Activated CD4-positive, alpha-beta T cell treated with anti-CD3 and anti-CD28 coated beads, Interleukin-2, amount 10 ng/mL, durations not matched to agents 24 days and 14 days (primary cell): ENCODE measurements at regions of chr11 and their contacts with region 1.

Region 1: GRCh38 chr11:44565211-44565952 is at the start of gene CD82:
- DNase-seq: peak; percentile 100
- H3K4me3 Mint-ChIP-seq: peak within 1 kb of the TSS; percentile 90
- H3K27ac Mint-ChIP-seq: peak within 1 kb of the TSS; percentile 88
- H3K4me1 Mint-ChIP-seq: peaks cover 51% of the 10 kb centered on the region
- H3K27me3 Mint-ChIP-seq: no peaks in the 10 kb centered on the region
- total RNA-seq, gene CD82: 448 and 469 TPM in 2 replicates

Region 2: DNA sequence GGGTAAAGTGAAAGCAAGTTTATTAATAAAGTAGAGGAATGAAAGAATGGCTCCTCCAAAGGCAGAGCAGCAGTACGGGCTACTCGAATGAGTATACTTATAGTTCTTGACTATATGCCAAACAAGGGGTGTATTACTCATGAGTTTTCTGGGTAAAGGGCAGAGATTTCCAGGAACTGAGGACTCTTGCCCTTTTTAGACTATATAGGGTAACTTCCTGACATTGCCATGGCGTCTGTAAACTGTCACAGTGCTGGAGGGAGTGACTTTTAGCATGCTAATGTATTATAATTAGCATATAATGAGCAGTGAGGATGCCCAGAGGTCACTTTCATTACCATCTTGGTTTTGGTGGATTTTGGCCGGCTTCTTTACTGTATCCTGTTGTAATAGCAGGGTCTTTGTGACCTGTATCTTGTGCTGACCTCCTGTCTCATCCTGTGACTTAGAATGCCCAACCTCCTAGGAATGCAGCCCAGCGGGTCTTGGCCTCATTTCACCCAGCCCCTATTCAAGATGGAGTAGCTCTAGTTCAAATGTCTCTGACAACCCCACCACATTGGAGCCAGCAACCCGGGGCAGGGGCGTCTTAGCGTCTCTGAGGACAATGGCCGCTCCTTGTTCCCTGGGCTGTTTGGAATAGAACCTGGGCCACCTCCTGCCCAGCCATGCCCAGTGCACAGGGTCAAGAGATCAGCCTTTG is 34.8 kb before region 1 on chr11:
- intact Hi-C with region 1: loop called (anchors 1 kb)
- DNase-seq: peak; percentile 87
- H3K4me3 Mint-ChIP-seq: peak overlapping the region; percentile 67
- H3K27ac Mint-ChIP-seq: peak overlapping the region; percentile 91
- H3K4me1 Mint-ChIP-seq: peaks cover 33% of the 10 kb centered on the region
- H3K27me3 Mint-ChIP-seq: no peaks in the 10 kb centered on the region

Region 3: GRCh38 chr11:44611687-44612434 is 46.5 kb after region 1 on chr11:
- intact Hi-C with region 1: loop called (anchors 1 kb)
- DNase-seq: peak; percentile 89
- H3K4me3 Mint-ChIP-seq: peak overlapping the region; percentile 46
- H3K27ac Mint-ChIP-seq: peak overlapping the region; percentile 88
- H3K4me1 Mint-ChIP-seq: peaks cover 73% of the 10 kb centered on the region
- H3K27me3 Mint-ChIP-seq: no peaks in the 10 kb centered on the region

Region 4: DNA sequence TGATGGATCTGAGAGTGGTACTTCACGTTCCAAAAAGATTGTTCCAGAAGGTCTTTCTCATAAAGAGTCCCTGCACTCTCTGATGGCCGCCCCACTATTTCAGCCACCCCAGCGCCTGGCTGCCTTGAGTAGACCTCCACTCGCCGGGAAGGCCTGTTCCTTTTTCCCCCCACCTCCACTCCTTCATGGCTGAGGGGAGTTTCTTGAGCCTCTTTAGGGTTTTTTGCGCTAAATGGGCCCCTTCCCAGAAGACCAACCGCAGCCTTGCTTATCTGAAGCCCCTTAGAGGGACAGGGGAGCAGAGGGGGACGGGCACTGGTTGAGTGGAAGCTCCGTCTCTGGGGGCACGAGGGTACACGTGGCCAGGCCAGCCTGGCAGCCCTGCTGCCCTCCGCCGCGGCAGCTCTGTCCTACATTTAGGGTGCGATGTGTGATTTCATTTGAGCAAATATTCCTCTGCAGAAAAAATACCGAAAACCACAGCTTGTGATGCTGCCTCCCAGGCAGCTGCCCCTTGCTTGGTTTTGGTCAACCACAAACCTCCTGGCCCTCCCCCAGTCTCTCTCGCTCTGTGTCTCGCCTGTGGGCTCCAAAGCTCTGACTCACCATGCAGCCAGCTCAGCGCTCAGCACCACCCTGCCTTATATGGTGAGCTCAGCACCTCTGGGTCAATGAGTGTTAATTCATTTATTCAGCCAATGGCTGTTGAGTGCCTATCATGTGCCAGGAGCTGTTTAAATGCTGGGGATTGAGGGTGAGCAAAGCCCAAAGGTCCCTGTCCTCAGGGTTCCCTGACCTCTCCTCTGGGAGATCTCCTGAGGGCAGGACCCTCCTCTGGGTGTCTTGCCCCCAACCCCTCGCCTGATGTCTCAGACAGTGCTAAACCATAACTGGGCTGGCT is 296.7 kb after region 1 on chr11:
- intact Hi-C with region 1: loop called (anchors 2 kb)
- DNase-seq: peak; percentile 92
- H3K4me3 Mint-ChIP-seq: peak overlapping the region; percentile 72
- H3K27ac Mint-ChIP-seq: peak overlapping the region; percentile 94
- H3K4me1 Mint-ChIP-seq: peaks cover 23% of the 10 kb centered on the region
- H3K27me3 Mint-ChIP-seq: peaks cover 66% of the 10 kb centered on the region

Region 5: GRCh38 chr11:45444796-45445195 is 879.4 kb after region 1 on chr11:
- intact Hi-C with region 1: no loop called
- DNase-seq: peak; percentile 54
- H3K4me3 Mint-ChIP-seq: no peak overlapping the region
- H3K27ac Mint-ChIP-seq: no peak overlapping the region
- H3K4me1 Mint-ChIP-seq: no peaks in the 10 kb centered on the region
- H3K27me3 Mint-ChIP-seq: no peaks in the 10 kb centered on the region

Region 6: DNA sequence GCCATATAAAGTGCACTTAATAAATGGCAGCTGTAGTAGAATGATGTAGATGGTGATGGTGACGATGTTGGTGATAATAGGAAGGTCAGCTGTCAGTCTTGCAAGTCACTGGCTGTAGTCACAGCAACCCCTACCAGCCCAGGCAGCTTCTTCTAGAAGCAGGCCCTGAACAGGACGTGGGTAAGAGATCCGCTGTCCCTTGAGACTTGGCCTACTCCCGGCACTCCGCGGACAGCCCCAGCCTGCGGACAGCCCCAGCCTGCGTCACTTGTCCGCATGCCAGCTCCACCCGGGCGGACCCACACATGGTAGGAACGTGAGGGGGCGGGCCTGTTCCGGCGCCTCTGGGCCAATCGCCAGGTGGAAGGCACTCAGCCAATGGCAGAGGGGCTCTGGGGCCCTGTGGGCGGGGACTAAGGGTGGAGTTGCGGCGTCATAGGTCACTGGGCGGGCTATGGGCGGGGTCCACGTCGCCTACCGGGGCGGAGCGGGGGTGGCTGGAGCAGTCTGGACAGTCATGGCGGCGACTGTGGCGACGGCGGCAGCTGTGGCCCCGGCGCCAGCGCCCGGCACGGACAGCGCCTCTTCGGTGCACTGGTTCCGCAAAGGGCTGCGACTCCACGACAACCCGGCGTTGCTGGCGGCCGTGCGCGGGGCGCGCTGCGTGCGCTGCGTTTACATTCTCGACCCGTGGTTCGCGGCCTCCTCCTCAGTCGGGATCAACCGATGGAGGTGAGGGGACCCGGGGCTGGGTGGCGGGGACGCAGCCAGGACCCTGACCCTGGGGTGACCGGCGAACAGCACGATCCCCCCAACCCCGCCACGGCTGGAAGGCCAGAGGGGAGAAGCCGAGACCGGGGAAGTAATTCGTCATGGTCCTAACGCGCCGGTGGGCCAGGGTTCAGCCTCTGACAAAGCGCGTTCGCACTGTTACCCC is 1281.9 kb after region 1 on chr11 and contains the start of gene CRY2:
- intact Hi-C with region 1: loop called (anchors 5 kb)
- DNase-seq: peak; percentile 99
- H3K4me3 Mint-ChIP-seq: peak within 1 kb of the TSS; percentile 85
- H3K27ac Mint-ChIP-seq: peak within 1 kb of the TSS; percentile 90
- H3K4me1 Mint-ChIP-seq: peaks cover 41% of the 10 kb centered on the region
- H3K27me3 Mint-ChIP-seq: peaks cover 7% of the 10 kb centered on the region
- total RNA-seq, gene CRY2: 22.1 and 22.5 TPM in 2 replicates